CD4-positive, alpha-beta T cell (primary cell): ENCODE measurements at regions of chr18 and their contacts with region 1.

Region 1: GRCh38 chr18:46173393-46174341 is 69.5 kb downstream of the HAUS1 start:
- DNase-seq: peak; percentile 88 to 96 (median 91)
- ATAC-seq: peak; percentile 91
- H3K4me3 ChIP-seq: peak overlapping the region; percentile 93
- H3K4me3 Mint-ChIP-seq: peak overlapping the region; percentile 99
- H3K27ac ChIP-seq: peak overlapping the region; percentile 64 to 70
- H3K27ac Mint-ChIP-seq: peak overlapping the region; percentile 91
- H3K4me1 ChIP-seq: peaks cover 39% of the 10 kb centered on the region
- H3K4me1 Mint-ChIP-seq: peaks cover 44% of the 10 kb centered on the region
- H3K27me3 ChIP-seq: no peaks in the 10 kb centered on the region
- H3K27me3 Mint-ChIP-seq: no peaks in the 10 kb centered on the region
- CTCF ChIP-seq: peak; percentile 99

Region 2: GRCh38 chr18:46148810-46149209 is 24.9 kb before region 1 on chr18:
- CTCF ChIA-PET with region 1: interaction called, 12 read pairs
- POLR2A ChIA-PET with region 1: interaction called, 6 read pairs
- intact Hi-C with region 1: no loop called
- DNase-seq: peak in 12 of 14 experiments; percentile 9 to 74 (median 40)
- ATAC-seq: peak; percentile 64
- H3K4me3 ChIP-seq: no peak overlapping the region
- H3K4me3 Mint-ChIP-seq: no peak overlapping the region
- H3K27ac ChIP-seq: no peak overlapping the region
- H3K27ac Mint-ChIP-seq: peak overlapping the region; percentile 5
- H3K4me1 ChIP-seq: peaks cover 42% of the 10 kb centered on the region
- H3K4me1 Mint-ChIP-seq: peaks cover 29% of the 10 kb centered on the region
- H3K27me3 ChIP-seq: no peaks in the 10 kb centered on the region
- H3K27me3 Mint-ChIP-seq: no peaks in the 10 kb centered on the region
- CTCF ChIP-seq: peak; percentile 77

Region 3: DNA sequence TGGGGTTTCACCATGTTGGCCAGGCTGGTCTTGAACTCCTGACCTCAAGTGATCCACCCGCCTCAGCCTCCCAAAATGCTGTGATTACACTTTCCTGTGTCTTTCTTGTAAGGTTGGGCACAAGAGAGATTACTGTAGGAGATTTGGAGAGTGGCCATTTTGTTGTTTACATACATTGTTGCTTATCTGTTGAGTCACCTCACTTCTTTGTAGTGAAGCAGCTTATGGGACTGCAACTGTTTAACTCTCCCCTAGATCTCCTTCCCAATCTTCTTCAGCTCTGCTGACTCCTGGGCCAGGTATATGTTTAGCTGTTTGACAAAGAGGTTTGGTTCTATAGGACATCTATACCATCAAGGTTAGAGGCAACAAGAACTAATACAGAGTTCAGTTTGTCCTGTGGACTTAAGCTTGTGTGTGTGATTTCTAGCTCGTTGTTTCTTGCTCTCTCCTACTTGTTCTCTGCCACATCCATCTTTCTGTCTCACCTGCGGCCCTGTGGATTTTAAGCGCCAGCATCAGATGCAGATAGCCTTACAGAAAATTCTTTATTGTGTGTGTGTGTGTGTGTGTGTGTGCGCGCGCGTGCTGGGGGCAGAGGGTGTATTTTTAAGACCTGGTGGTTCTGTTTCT is 26.0 kb after region 1 on chr18:
- CTCF ChIA-PET with region 1: interaction called, 22 read pairs
- POLR2A ChIA-PET with region 1: no interaction called
- intact Hi-C with region 1: no loop called
- DNase-seq: no peak
- ATAC-seq: peak; percentile 43
- H3K4me3 ChIP-seq: no peak overlapping the region
- H3K4me3 Mint-ChIP-seq: peak overlapping the region; percentile 39
- H3K27ac ChIP-seq: no peak overlapping the region
- H3K27ac Mint-ChIP-seq: peak overlapping the region; percentile 73
- H3K4me1 ChIP-seq: peaks cover 26% of the 10 kb centered on the region
- H3K4me1 Mint-ChIP-seq: peaks cover 73% of the 10 kb centered on the region
- H3K27me3 ChIP-seq: no peaks in the 10 kb centered on the region
- H3K27me3 Mint-ChIP-seq: no peaks in the 10 kb centered on the region
- CTCF ChIP-seq: no peak

Region 4: DNA sequence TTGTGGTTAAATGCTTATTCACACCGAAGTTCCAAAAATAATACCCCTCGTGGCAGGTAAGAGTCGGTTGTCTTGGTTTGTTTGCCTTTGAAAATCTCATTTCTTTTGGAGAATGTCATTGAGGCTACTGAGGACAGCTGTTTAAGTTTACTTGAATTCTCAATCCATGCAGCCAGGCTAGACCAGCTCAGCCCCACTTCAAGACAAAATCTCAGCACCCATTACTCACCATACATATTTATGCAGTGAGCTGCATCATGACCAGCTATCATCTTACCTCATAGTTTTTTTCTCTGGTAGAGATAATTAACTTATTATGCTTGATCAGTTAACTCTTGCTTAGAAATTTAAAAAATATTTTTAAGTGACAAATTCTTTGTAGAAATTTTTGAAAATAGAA is 46.4 kb after region 1 on chr18:
- CTCF ChIA-PET with region 1: interaction called, 21 read pairs
- POLR2A ChIA-PET with region 1: interaction called, 5 read pairs
- intact Hi-C with region 1: no loop called
- DNase-seq: no peak
- ATAC-seq: no peak
- H3K4me3 ChIP-seq: no peak overlapping the region
- H3K4me3 Mint-ChIP-seq: no peak overlapping the region
- H3K27ac ChIP-seq: no peak overlapping the region
- H3K27ac Mint-ChIP-seq: no peak overlapping the region
- H3K4me1 ChIP-seq: peaks cover 9% of the 10 kb centered on the region
- H3K4me1 Mint-ChIP-seq: peaks cover 82% of the 10 kb centered on the region
- H3K27me3 ChIP-seq: no peaks in the 10 kb centered on the region
- H3K27me3 Mint-ChIP-seq: no peaks in the 10 kb centered on the region
- CTCF ChIP-seq: no peak

Region 5: GRCh38 chr18:46502444-46502843 is 328.8 kb after region 1 on chr18:
- CTCF ChIA-PET with region 1: no interaction called
- POLR2A ChIA-PET with region 1: no interaction called
- intact Hi-C with region 1: no loop called
- DNase-seq: no peak
- ATAC-seq: no peak
- H3K4me3 ChIP-seq: no peak overlapping the region
- H3K4me3 Mint-ChIP-seq: no peak overlapping the region
- H3K27ac ChIP-seq: no peak overlapping the region
- H3K27ac Mint-ChIP-seq: no peak overlapping the region
- H3K4me1 ChIP-seq: no peaks in the 10 kb centered on the region
- H3K4me1 Mint-ChIP-seq: no peaks in the 10 kb centered on the region
- H3K27me3 ChIP-seq: peaks cover 4 to 18% of the 10 kb centered on the region in 2 experiments
- H3K27me3 Mint-ChIP-seq: peaks cover 26% of the 10 kb centered on the region
- CTCF ChIP-seq: no peak

Region 6: GRCh38 chr18:46660955-46661749 is 487.5 kb after region 1 on chr18:
- CTCF ChIA-PET with region 1: interaction called, 15 read pairs
- POLR2A ChIA-PET with region 1: interaction called, 5 read pairs
- intact Hi-C with region 1: loop called (anchors 1 kb)
- DNase-seq: no peak
- ATAC-seq: no peak
- H3K4me3 ChIP-seq: no peak overlapping the region
- H3K4me3 Mint-ChIP-seq: no peak overlapping the region
- H3K27ac ChIP-seq: no peak overlapping the region
- H3K27ac Mint-ChIP-seq: no peak overlapping the region
- H3K4me1 ChIP-seq: peaks cover 3% of the 10 kb centered on the region
- H3K4me1 Mint-ChIP-seq: no peaks in the 10 kb centered on the region
- H3K27me3 ChIP-seq: no peaks in the 10 kb centered on the region
- H3K27me3 Mint-ChIP-seq: no peaks in the 10 kb centered on the region
- CTCF ChIP-seq: no peak